Activated naive CD4-positive, alpha-beta T cell treated with anti-CD3 and anti-CD28 coated beads for 36 hours (primary cell): ENCODE measurements at regions of chr20 and their contacts with region 1.

Region 1: GRCh38 chr20:34876162-34877001 is at the start of gene ACSS2:
- DNase-seq: peak; percentile 100
- H3K4me3 Mint-ChIP-seq: peak within 1 kb of the TSS; percentile 87
- H3K27ac Mint-ChIP-seq: peak within 1 kb of the TSS; percentile 85
- H3K4me1 Mint-ChIP-seq: peaks cover 59% of the 10 kb centered on the region
- H3K27me3 Mint-ChIP-seq: no peaks in the 10 kb centered on the region
- total RNA-seq, gene ACSS2: 71.3 to 73.6 TPM

Region 2: DNA sequence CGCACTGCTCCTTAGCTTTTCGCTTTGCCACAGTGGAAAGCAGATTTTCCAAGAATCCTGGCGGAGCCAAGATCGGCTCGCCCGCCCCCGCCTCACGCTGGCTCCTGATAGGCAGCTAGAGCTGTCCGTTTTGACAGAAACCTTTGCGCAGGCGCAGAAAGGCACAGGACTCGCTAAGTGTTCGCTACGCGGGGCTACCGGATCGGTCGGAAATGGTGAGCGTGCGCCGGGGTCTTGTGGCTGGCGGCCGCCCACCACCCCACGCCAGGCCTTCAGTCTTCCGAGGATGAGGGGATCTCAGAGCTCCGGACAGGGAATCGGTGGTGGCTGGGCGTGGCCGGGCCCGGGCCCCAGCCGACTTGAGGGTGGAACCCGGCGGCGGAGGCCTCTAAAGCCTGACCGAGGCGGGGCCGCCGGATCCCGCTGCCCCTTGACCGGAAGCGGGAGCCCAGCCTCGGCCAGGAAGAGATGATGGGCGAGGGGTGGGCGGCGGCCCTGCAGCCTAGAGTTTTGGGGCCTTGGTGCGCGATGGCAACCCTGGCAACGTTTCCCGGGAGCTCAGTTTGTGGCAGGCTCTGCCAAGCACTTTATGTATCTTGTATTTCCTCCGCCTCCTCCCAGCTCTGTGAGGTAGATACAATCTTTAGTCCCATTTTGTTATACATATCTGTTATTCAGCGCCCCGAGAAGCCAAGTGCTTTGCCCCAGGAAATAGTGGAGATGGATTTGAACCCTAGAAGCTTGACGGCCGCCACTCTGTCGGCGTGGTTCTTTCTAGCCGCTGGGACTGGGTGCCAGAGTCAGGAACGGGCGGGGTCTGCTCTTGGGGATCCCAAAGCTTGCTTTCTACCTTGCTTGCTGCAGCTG is 359.9 kb before region 1 on chr20 and contains the start of gene DYNLRB1:
- CTCF ChIA-PET with region 1: no interaction called
- intact Hi-C with region 1: loop called (anchors 5 kb)
- DNase-seq: peak; percentile 96
- H3K4me3 Mint-ChIP-seq: peak within 1 kb of the TSS; percentile 98
- H3K27ac Mint-ChIP-seq: peak within 1 kb of the TSS; percentile 96
- H3K4me1 Mint-ChIP-seq: peaks cover 29% of the 10 kb centered on the region
- H3K27me3 Mint-ChIP-seq: no peaks in the 10 kb centered on the region
- total RNA-seq, gene DYNLRB1: 81.9 to 92.9 TPM

Region 3: GRCh38 chr20:34834459-34834893 is 41.9 kb before region 1 on chr20:
- CTCF ChIA-PET with region 1: interaction called, 4 read pairs
- intact Hi-C with region 1: loop called (anchors 1 kb)
- DNase-seq: no peak
- H3K4me3 Mint-ChIP-seq: no peak overlapping the region
- H3K27ac Mint-ChIP-seq: no peak overlapping the region
- H3K4me1 Mint-ChIP-seq: no peaks in the 10 kb centered on the region
- H3K27me3 Mint-ChIP-seq: peaks cover 7% of the 10 kb centered on the region

Region 4: GRCh38 chr20:34922654-34923424 is 46.5 kb after region 1 on chr20:
- CTCF ChIA-PET with region 1: interaction called, 7 read pairs
- intact Hi-C with region 1: loop called (anchors 1 kb)
- DNase-seq: no peak
- H3K4me3 Mint-ChIP-seq: no peak overlapping the region
- H3K27ac Mint-ChIP-seq: no peak overlapping the region
- H3K4me1 Mint-ChIP-seq: peaks cover 29% of the 10 kb centered on the region
- H3K27me3 Mint-ChIP-seq: no peaks in the 10 kb centered on the region

Region 5: GRCh38 chr20:35092524-35093266 is 216.3 kb after region 1 on chr20 and contains the start of gene TRPC4AP:
- CTCF ChIA-PET with region 1: interaction called, 12 read pairs
- intact Hi-C with region 1: loop called (anchors 1 kb)
- DNase-seq: peak; percentile 90
- H3K4me3 Mint-ChIP-seq: peak within 1 kb of the TSS; percentile 89
- H3K27ac Mint-ChIP-seq: peak within 1 kb of the TSS; percentile 100
- H3K4me1 Mint-ChIP-seq: peaks cover 59% of the 10 kb centered on the region
- H3K27me3 Mint-ChIP-seq: no peaks in the 10 kb centered on the region
- total RNA-seq, gene TRPC4AP: 49.6 to 51.7 TPM

Region 6: DNA sequence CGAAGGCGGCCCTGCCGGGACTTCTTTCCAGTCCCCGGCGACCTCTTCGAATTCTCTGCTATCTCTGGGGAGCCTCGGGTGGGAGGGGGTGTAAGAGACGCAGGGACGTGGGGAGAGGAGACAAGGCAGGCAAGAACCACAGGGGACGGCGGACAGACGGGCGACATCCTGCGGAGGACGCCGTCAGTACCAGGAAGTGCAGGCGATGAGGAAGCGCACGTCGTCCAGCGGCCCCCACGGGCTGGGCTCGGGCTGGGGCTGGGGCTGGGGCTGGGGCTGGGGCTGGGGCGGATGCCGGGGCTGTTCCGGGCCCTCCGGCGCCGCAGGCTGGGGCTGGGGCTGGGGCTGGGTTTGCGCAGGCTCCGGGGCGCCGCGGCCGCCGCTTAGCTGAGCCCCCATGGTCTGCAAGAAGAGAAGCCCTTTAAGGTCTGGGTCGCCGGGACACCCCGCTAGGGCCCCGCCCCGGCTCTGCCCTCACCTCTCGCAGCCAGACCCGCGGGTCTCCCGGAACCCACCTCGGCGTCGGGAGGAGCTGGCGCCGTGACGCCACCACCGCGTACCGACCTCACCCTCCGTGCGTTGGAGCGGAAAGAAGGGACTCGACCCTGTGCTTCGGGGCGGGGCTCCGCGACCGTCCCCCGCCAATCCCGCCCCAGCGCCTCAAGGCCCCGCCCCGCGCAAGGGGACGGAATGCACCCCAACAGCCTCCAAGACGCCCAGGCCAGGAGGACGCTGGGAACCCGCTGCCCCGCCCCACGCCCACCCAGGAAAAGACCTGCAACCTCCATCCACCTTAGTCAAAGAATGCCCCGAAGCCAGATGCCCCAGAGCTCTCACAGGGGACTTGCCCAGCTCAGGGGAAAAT is 401.4 kb after region 1 on chr20 and contains the start of gene MMP24OS:
- CTCF ChIA-PET with region 1: no interaction called
- intact Hi-C with region 1: loop called (anchors 10 kb)
- DNase-seq: peak; percentile 87
- H3K4me3 Mint-ChIP-seq: peak within 1 kb of the TSS; percentile 97
- H3K27ac Mint-ChIP-seq: peak within 1 kb of the TSS; percentile 96
- H3K4me1 Mint-ChIP-seq: peaks cover 16% of the 10 kb centered on the region
- H3K27me3 Mint-ChIP-seq: no peaks in the 10 kb centered on the region
- total RNA-seq, gene MMP24OS: 26.4 to 29.2 TPM